ENCODE measurements at regions of chr13 and their contacts with region 1.

Region 1: GRCh38 chr13:105518086-105518485 is 1017.4 kb downstream of the EFNB2 start:
- DNase-seq: no peak
- H3K4me3 Mint-ChIP-seq: no peak overlapping the region
- H3K27ac Mint-ChIP-seq: no peak overlapping the region
- H3K4me1 Mint-ChIP-seq: peaks cover 9% of the 10 kb centered on the region
- H3K27me3 Mint-ChIP-seq: no peaks in the 10 kb centered on the region
- CTCF ChIP-seq: no peak

Region 2: GRCh38 chr13:105255472-105255871 is 262.6 kb before region 1 on chr13:
- CTCF ChIA-PET with region 1: no interaction called
- POLR2A ChIA-PET with region 1: no interaction called
- intact Hi-C with region 1: loop called (anchors 10 kb)
- DNase-seq: no peak
- H3K4me3 Mint-ChIP-seq: no peak overlapping the region
- H3K27ac Mint-ChIP-seq: no peak overlapping the region
- H3K4me1 Mint-ChIP-seq: no peaks in the 10 kb centered on the region
- H3K27me3 Mint-ChIP-seq: no peaks in the 10 kb centered on the region
- CTCF ChIP-seq: no peak